B cell (primary cell): ENCODE measurements at regions of chr16 and their contacts with region 1.

Region 1: GRCh38 chr16:68470461-68471150 is 22.3 kb upstream of the SMPD3 start:
- DNase-seq: peak; percentile 87
- ATAC-seq: peak; percentile 90
- H3K4me3 ChIP-seq: peak overlapping the region in 4 of 5 experiments; percentile 35 to 66 (median 46)
- H3K4me3 Mint-ChIP-seq: peak overlapping the region; percentile 88
- H3K27ac ChIP-seq: peak overlapping the region; percentile 77 to 81
- H3K27ac Mint-ChIP-seq: peak overlapping the region; percentile 94
- H3K4me1 ChIP-seq: peaks cover 43 to 62% of the 10 kb centered on the region in 2 donors
- H3K4me1 Mint-ChIP-seq: peaks cover 56% of the 10 kb centered on the region
- H3K27me3 ChIP-seq: no peaks in the 10 kb centered on the region
- H3K27me3 Mint-ChIP-seq: no peaks in the 10 kb centered on the region
- CTCF ChIP-seq: no peak

Region 2: GRCh38 chr16:68417711-68418301 is 52.8 kb before region 1 on chr16:
- CTCF ChIA-PET with region 1: interaction called, 3 read pairs
- POLR2A ChIA-PET with region 1: no interaction called
- intact Hi-C with region 1: loop called (anchors 1 kb)
- DNase-seq: peak; percentile 70
- ATAC-seq: peak; percentile 84
- H3K4me3 ChIP-seq: peak overlapping the region in 3 of 5 experiments; percentile 13 to 45 (median 34)
- H3K4me3 Mint-ChIP-seq: peak overlapping the region; percentile 83
- H3K27ac ChIP-seq: peak overlapping the region; percentile 62 to 83
- H3K27ac Mint-ChIP-seq: peak overlapping the region; percentile 96
- H3K4me1 ChIP-seq: peaks cover 24 to 29% of the 10 kb centered on the region in 2 donors
- H3K4me1 Mint-ChIP-seq: peaks cover 28% of the 10 kb centered on the region
- H3K27me3 ChIP-seq: no peaks in the 10 kb centered on the region
- H3K27me3 Mint-ChIP-seq: no peaks in the 10 kb centered on the region
- CTCF ChIP-seq: no peak

Region 3: GRCh38 chr16:68448360-68448970 is 22.1 kb before region 1 on chr16 and contains the start of gene SMPD3:
- CTCF ChIA-PET with region 1: interaction called, 6 read pairs
- POLR2A ChIA-PET with region 1: no interaction called
- intact Hi-C with region 1: loop called (anchors 1 kb)
- DNase-seq: peak; percentile 97
- ATAC-seq: peak; percentile 97
- H3K4me3 ChIP-seq: peak within 1 kb of the TSS; percentile 16 to 66 (median 53)
- H3K4me3 Mint-ChIP-seq: peak within 1 kb of the TSS; percentile 77
- H3K27ac ChIP-seq: no peak within 1 kb of the TSS
- H3K27ac Mint-ChIP-seq: peak within 1 kb of the TSS; percentile 43
- H3K4me1 ChIP-seq: peaks cover 20 to 22% of the 10 kb centered on the region in 2 donors
- H3K4me1 Mint-ChIP-seq: peaks cover 16% of the 10 kb centered on the region
- H3K27me3 ChIP-seq: peaks cover 0 to 31% (median 28%) of the 10 kb centered on the region in 4 experiments
- H3K27me3 Mint-ChIP-seq: peaks cover 22% of the 10 kb centered on the region
- CTCF ChIP-seq: no peak
- total RNA-seq, gene SMPD3: 1.2 and 1.3 TPM in 2 replicates

Region 4: GRCh38 chr16:68512183-68512582 is 41.6 kb after region 1 on chr16:
- CTCF ChIA-PET with region 1: interaction called, 10 read pairs
- POLR2A ChIA-PET with region 1: no interaction called
- intact Hi-C with region 1: no loop called
- DNase-seq: no peak
- ATAC-seq: no peak
- H3K4me3 ChIP-seq: no peak overlapping the region
- H3K4me3 Mint-ChIP-seq: no peak overlapping the region
- H3K27ac ChIP-seq: no peak overlapping the region
- H3K27ac Mint-ChIP-seq: peak overlapping the region; percentile 32
- H3K4me1 ChIP-seq: peaks cover 5 to 9% of the 10 kb centered on the region in 2 donors
- H3K4me1 Mint-ChIP-seq: peaks cover 4% of the 10 kb centered on the region
- H3K27me3 ChIP-seq: peaks cover 0 to 8% (median 3%) of the 10 kb centered on the region in 4 experiments
- H3K27me3 Mint-ChIP-seq: no peaks in the 10 kb centered on the region
- CTCF ChIP-seq: no peak